ENCODE measurements at regions of chr15 and their contacts with region 1.

Region 1: DNA sequence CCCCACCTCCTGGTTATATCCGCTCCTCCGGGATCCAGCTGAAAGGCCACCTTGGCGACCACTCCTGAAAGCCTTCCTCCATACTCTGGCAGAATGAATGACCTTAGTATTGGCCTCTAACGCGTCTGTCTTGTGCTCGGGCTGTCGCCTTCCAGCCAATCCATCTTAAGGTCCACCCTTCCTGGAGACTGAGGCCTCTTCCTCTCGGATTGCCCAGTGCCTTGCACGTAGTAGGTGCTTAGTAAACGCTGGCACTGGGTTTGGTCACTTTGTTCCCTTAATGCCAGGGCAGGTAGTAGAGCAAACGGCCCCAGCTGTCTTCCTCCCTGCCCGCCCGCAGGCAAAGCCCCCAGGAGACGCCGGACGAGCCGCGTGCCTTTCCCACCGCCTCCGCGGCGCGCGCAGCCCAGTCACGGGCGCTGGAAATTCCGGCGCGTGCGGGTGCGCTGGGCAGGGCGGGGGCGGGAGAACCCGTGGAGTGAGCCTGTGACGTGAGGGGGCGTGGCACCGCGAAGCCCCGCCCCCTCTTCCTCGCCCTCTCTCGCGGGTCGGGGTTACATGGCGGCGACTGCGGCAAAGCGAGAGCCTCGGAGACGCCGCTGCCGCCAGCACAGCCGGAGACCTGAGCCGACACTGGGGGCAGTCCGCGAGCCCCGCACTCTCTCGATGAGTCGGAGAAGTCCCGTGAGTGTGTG is at the start of gene MAPK6:
- DNase-seq: peak; percentile 91 to 96 (median 94)
- ATAC-seq: peak; percentile 95
- H3K4me3 ChIP-seq: peak within 1 kb of the TSS; percentile 79
- H3K4me3 Mint-ChIP-seq: peak within 1 kb of the TSS; percentile 90 to 99 (median 96)
- H3K27ac ChIP-seq: peak within 1 kb of the TSS; percentile 88
- H3K27ac Mint-ChIP-seq: peak within 1 kb of the TSS; percentile 88 to 100 (median 98)
- H3K4me1 ChIP-seq: peaks cover 9 to 29% of the 10 kb centered on the region in 2 donors
- H3K4me1 Mint-ChIP-seq: peaks cover 32 to 50% (median 39%) of the 10 kb centered on the region in 7 donors
- H3K27me3 ChIP-seq: no peaks in the 10 kb centered on the region
- H3K27me3 Mint-ChIP-seq: peaks cover 0 to 15% (median 0%) of the 10 kb centered on the region in 5 donors
- total RNA-seq, gene MAPK6: 19.2 to 44.1 (median 25.3) TPM

Region 2: GRCh38 chr15:52005748-52006701 is 12.8 kb before region 1 on chr15:
- CTCF ChIA-PET with region 1: no interaction called
- POLR2A ChIA-PET with region 1: interaction called, 6 read pairs
- intact Hi-C with region 1: loop called in 1 of 2 experiments (anchors 1 kb)
- DNase-seq: no peak
- ATAC-seq: no peak
- H3K4me3 ChIP-seq: no peak overlapping the region
- H3K4me3 Mint-ChIP-seq: peak overlapping the region in 1 of 10 donors; percentile 54
- H3K27ac ChIP-seq: no peak overlapping the region
- H3K27ac Mint-ChIP-seq: peak overlapping the region in 1 of 9 donors; percentile 82
- H3K4me1 ChIP-seq: peaks cover 0 to 9% of the 10 kb centered on the region in 2 donors
- H3K4me1 Mint-ChIP-seq: peaks cover 9 to 58% (median 16%) of the 10 kb centered on the region in 7 donors
- H3K27me3 ChIP-seq: no peaks in the 10 kb centered on the region
- H3K27me3 Mint-ChIP-seq: peaks cover 0 to 2% (median 0%) of the 10 kb centered on the region in 5 donors

Region 3: GRCh38 chr15:52039925-52040781 is 21.3 kb after region 1 on chr15:
- CTCF ChIA-PET with region 1: interaction called, 3 read pairs
- POLR2A ChIA-PET with region 1: interaction called, 13 read pairs
- intact Hi-C with region 1: loop called (anchors 1 kb)
- DNase-seq: no peak
- ATAC-seq: peak; percentile 51
- H3K4me3 ChIP-seq: no peak overlapping the region
- H3K4me3 Mint-ChIP-seq: peak overlapping the region in 7 of 10 donors; percentile 4 to 45 (median 26)
- H3K27ac ChIP-seq: peak overlapping the region; percentile 32
- H3K27ac Mint-ChIP-seq: peak overlapping the region; percentile 0 to 91 (median 42)
- H3K4me1 ChIP-seq: peaks cover 4 to 16% of the 10 kb centered on the region in 2 donors
- H3K4me1 Mint-ChIP-seq: peaks cover 34 to 87% (median 64%) of the 10 kb centered on the region in 7 donors
- H3K27me3 ChIP-seq: no peaks in the 10 kb centered on the region
- H3K27me3 Mint-ChIP-seq: no peaks in the 10 kb centered on the region

Region 4: DNA sequence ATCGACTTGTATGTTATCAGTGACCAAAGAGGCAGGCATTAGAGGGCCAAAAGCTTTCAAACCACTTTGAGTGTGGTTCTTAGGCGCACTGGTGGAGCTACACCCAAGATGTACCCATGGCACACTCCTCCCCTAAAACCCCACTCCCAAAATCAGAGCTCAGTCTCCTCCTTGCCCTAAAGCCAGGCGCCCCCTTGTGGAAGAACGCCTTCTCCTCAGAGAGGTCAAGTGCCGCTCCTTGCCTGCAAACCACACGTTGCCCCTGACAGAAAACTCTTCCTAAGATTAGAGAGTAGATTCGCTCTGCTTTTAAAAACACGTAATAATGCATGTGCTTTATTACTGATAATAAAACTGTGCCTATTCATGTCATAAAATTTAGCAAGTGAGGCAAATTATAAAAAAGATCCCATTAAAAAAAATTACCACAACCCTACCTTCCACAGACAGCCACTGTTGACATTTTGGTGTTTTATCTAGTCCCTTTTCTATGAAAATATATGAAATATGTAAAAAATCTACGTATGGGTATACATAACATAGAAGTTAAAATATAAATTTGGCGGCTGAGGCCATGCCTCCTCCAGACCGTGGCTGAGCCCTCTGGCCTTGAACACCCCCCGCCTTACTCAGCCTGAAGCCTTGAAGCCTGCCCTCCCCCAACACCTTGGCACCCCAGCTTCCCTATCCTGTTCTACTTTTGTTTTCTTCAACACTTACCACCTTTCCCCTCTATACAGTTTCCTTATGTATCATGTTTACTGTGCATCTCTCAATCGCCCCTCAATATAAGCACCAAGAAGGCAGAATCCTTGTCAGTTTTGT is 60.2 kb after region 1 on chr15:
- CTCF ChIA-PET with region 1: interaction called, 3 read pairs
- POLR2A ChIA-PET with region 1: interaction called, 3 read pairs
- intact Hi-C with region 1: loop called (anchors 1 to 2 kb)
- DNase-seq: peak; percentile 58 to 82 (median 75)
- ATAC-seq: peak; percentile 87
- H3K4me3 ChIP-seq: no peak overlapping the region
- H3K4me3 Mint-ChIP-seq: no peak overlapping the region
- H3K27ac ChIP-seq: no peak overlapping the region
- H3K27ac Mint-ChIP-seq: peak overlapping the region in 1 of 9 donors; percentile 49
- H3K4me1 ChIP-seq: peaks cover 0 to 13% of the 10 kb centered on the region in 2 donors
- H3K4me1 Mint-ChIP-seq: peaks cover 0 to 26% (median 10%) of the 10 kb centered on the region in 7 donors
- H3K27me3 ChIP-seq: no peaks in the 10 kb centered on the region
- H3K27me3 Mint-ChIP-seq: peaks cover 0 to 7% (median 0%) of the 10 kb centered on the region in 5 donors

Region 5: DNA sequence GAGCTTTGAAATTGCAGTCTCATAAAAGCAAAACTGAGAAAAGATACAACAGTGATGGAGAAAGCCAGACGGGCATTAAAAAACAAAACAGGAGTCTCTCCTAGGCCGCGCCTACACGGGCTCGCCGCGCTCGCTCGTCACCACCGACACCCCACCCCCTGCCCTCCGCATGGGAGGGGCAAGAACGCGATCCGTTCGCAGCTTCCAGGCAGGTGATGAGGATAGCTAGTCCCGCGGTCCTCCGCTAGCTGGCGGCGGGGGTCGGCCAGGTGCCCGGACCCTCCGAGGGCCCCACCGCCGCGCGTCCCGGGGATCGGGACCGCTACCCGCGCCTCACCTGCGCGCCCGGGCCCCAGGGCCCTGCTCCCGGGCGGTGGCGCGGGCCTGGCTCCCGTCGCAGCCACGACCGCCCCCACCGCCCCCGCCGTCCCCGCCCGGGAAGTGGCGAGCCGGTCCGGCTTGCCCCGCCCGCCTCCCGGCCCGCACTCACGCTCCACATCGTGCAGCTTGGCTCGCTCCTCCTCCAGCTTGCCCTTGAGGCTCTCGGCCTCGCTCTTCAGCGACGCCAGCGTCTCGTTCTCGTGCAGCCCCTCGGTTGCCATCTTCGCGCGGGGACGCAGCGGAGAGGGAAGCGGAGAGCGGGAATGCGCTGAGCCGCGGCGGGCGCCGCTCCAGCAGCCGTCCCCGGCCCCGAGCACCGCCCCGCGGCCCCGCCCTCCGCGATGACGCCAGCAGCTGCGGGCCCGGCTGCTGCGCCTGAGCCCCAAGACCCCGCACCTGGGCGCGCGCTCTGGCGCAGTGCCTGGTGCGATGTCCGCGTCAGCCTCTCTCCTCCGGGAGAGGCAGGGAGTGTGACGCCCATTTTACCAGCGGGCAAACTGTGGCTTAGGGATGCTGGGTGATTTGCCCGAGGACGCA is 160.7 kb after region 1 on chr15:
- CTCF ChIA-PET with region 1: interaction called, 6 read pairs
- POLR2A ChIA-PET with region 1: interaction called, 5 read pairs
- intact Hi-C with region 1: loop called in 1 of 2 experiments (anchors 1 kb)
- DNase-seq: peak; percentile 79 to 92 (median 91)
- ATAC-seq: peak; percentile 91
- H3K4me3 ChIP-seq: peak overlapping the region; percentile 98
- H3K4me3 Mint-ChIP-seq: peak overlapping the region; percentile 86 to 100 (median 94)
- H3K27ac ChIP-seq: peak overlapping the region; percentile 95
- H3K27ac Mint-ChIP-seq: peak overlapping the region; percentile 90 to 99 (median 98)
- H3K4me1 ChIP-seq: peaks cover 19 to 20% of the 10 kb centered on the region in 2 donors
- H3K4me1 Mint-ChIP-seq: peaks cover 14 to 50% (median 40%) of the 10 kb centered on the region in 7 donors
- H3K27me3 ChIP-seq: no peaks in the 10 kb centered on the region
- H3K27me3 Mint-ChIP-seq: no peaks in the 10 kb centered on the region

Region 6: DNA sequence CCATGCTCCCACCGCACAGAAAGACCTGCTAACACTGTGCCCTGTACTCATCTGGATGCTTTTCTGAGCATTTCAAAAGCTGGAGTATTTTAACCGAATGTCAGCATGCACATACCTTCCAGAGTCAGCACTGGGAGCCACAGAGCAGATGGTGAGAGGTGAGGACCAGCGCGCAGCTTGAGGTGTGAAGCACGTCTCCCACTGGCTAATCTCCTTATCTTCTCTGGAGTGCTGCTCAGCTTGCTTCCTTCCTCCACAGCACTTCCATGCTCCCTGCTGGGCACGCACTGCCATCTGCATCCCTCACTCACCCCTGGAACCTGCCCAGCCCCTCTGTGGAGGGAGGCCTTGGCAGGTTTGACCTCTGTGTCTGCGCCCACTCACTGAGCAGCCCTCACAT is 172.4 kb after region 1 on chr15 and contains the start of gene GNB5:
- CTCF ChIA-PET with region 1: no interaction called
- POLR2A ChIA-PET with region 1: no interaction called
- intact Hi-C with region 1: no loop called
- DNase-seq: no peak
- ATAC-seq: no peak
- H3K4me3 ChIP-seq: no peak within 1 kb of the TSS
- H3K4me3 Mint-ChIP-seq: no peak within 1 kb of the TSS
- H3K27ac ChIP-seq: no peak within 1 kb of the TSS
- H3K27ac Mint-ChIP-seq: no peak within 1 kb of the TSS
- H3K4me1 ChIP-seq: no peaks in the 10 kb centered on the region
- H3K4me1 Mint-ChIP-seq: no peaks in the 10 kb centered on the region
- H3K27me3 ChIP-seq: no peaks in the 10 kb centered on the region
- H3K27me3 Mint-ChIP-seq: peaks cover 0 to 9% (median 0%) of the 10 kb centered on the region in 5 donors
- total RNA-seq, gene GNB5: 35.9 to 80.0 (median 50.7) TPM

Measured in naive thymus-derived CD4-positive, alpha-beta T cell (primary cell).